ENCODE measurements at regions of chr11 and their contacts with region 1.

Region 1: DNA sequence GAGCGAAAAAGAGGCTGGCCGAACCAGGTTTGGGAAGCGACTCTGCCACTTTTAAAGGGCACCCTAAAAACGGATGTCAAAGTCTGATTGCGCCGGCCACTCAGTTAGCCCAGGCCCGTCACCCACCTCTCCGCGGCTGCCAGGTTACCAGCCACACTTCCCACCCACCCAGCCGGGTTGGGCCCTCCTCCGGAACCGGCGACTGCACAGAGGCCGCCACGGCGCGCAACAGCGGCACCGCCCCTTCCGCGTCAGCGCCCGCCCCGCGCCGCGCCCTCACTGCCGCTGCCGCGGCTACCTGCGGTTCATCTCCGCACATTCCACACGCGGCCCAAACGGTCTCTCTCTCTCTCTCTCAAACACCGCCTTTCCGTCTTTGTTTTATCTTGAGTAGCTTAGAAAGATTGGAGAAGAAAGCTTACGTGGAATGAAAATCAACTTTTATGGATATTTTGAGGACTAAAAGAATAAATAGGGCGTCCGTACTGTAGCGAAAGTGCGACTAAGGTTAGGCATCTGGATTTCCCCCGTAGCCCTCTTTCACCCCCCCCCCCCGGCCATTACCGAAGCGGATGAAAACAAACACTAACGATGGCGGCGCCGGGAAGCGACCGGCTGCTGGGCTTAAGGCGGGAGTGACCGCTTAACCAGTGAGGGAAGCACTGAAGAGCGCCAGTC is at the starts of genes ATG13 and HARBI1:
- DNase-seq: peak; percentile 81 to 96 (median 92)
- ATAC-seq: peak; percentile 91
- H3K4me3 ChIP-seq: peak within 1 kb of the TSS; percentile 84 to 95
- H3K4me3 Mint-ChIP-seq: peak within 1 kb of the TSS; percentile 95
- H3K27ac ChIP-seq: peak within 1 kb of the TSS; percentile 96 to 98
- H3K27ac Mint-ChIP-seq: peak within 1 kb of the TSS; percentile 98
- H3K4me1 ChIP-seq: peaks cover 19% of the 10 kb centered on the region
- H3K4me1 Mint-ChIP-seq: peaks cover 42% of the 10 kb centered on the region
- H3K27me3 ChIP-seq: no peaks in the 10 kb centered on the region
- H3K27me3 Mint-ChIP-seq: no peaks in the 10 kb centered on the region
- CTCF ChIP-seq: no peak
- total RNA-seq, gene ATG13: 117 to 137 TPM
- total RNA-seq, gene HARBI1: 18.1 to 19.1 TPM

Region 2: GRCh38 chr11:46121724-46122477 is 495.2 kb before region 1 on chr11:
- CTCF ChIA-PET with region 1: no interaction called
- POLR2A ChIA-PET with region 1: no interaction called
- intact Hi-C with region 1: loop called (anchors 5 to 10 kb)
- DNase-seq: peak; percentile 50 to 92 (median 73)
- ATAC-seq: peak; percentile 54
- H3K4me3 ChIP-seq: peak overlapping the region; percentile 58 to 63
- H3K4me3 Mint-ChIP-seq: peak overlapping the region; percentile 88
- H3K27ac ChIP-seq: peak overlapping the region; percentile 1 to 26
- H3K27ac Mint-ChIP-seq: peak overlapping the region; percentile 96
- H3K4me1 ChIP-seq: peaks cover 30% of the 10 kb centered on the region
- H3K4me1 Mint-ChIP-seq: peaks cover 33% of the 10 kb centered on the region
- H3K27me3 ChIP-seq: no peaks in the 10 kb centered on the region
- H3K27me3 Mint-ChIP-seq: no peaks in the 10 kb centered on the region
- CTCF ChIP-seq: no peak

Region 3: GRCh38 chr11:46438211-46438610 is 178.9 kb before region 1 on chr11:
- CTCF ChIA-PET with region 1: no interaction called
- POLR2A ChIA-PET with region 1: no interaction called
- intact Hi-C with region 1: no loop called
- DNase-seq: no peak
- ATAC-seq: no peak
- H3K4me3 ChIP-seq: no peak overlapping the region
- H3K4me3 Mint-ChIP-seq: no peak overlapping the region
- H3K27ac ChIP-seq: no peak overlapping the region
- H3K27ac Mint-ChIP-seq: no peak overlapping the region
- H3K4me1 ChIP-seq: no peaks in the 10 kb centered on the region
- H3K4me1 Mint-ChIP-seq: no peaks in the 10 kb centered on the region
- H3K27me3 ChIP-seq: no peaks in the 10 kb centered on the region
- H3K27me3 Mint-ChIP-seq: no peaks in the 10 kb centered on the region
- CTCF ChIP-seq: no peak

Region 4: GRCh38 chr11:46489661-46490560 is 127.2 kb before region 1 on chr11:
- CTCF ChIA-PET with region 1: interaction called, 10 read pairs
- POLR2A ChIA-PET with region 1: interaction called, 4 read pairs
- intact Hi-C with region 1: loop called (anchors 1 kb)
- DNase-seq: peak in 7 of 9 experiments; percentile 5 to 61 (median 32)
- ATAC-seq: peak; percentile 59
- H3K4me3 ChIP-seq: no peak overlapping the region
- H3K4me3 Mint-ChIP-seq: no peak overlapping the region
- H3K27ac ChIP-seq: no peak overlapping the region
- H3K27ac Mint-ChIP-seq: no peak overlapping the region
- H3K4me1 ChIP-seq: no peaks in the 10 kb centered on the region
- H3K4me1 Mint-ChIP-seq: peaks cover 11% of the 10 kb centered on the region
- H3K27me3 ChIP-seq: no peaks in the 10 kb centered on the region
- H3K27me3 Mint-ChIP-seq: no peaks in the 10 kb centered on the region
- CTCF ChIP-seq: peak; percentile 61

Region 5: GRCh38 chr11:46593550-46594373 is 23.4 kb before region 1 on chr11 and contains the start of gene AMBRA1:
- CTCF ChIA-PET with region 1: interaction called, 4 read pairs
- POLR2A ChIA-PET with region 1: interaction called, 7 read pairs
- intact Hi-C with region 1: loop called (anchors 1 kb)
- DNase-seq: peak; percentile 70 to 91 (median 81)
- ATAC-seq: peak; percentile 90
- H3K4me3 ChIP-seq: peak within 1 kb of the TSS; percentile 67 to 80
- H3K4me3 Mint-ChIP-seq: peak within 1 kb of the TSS; percentile 98
- H3K27ac ChIP-seq: peak within 1 kb of the TSS; percentile 57 to 67
- H3K27ac Mint-ChIP-seq: peak within 1 kb of the TSS; percentile 96
- H3K4me1 ChIP-seq: peaks cover 32% of the 10 kb centered on the region
- H3K4me1 Mint-ChIP-seq: peaks cover 43% of the 10 kb centered on the region
- H3K27me3 ChIP-seq: no peaks in the 10 kb centered on the region
- H3K27me3 Mint-ChIP-seq: no peaks in the 10 kb centered on the region
- CTCF ChIP-seq: no peak
- total RNA-seq, gene AMBRA1: 31.2 to 34.1 TPM

Region 6: GRCh38 chr11:46826310-46827044 is 209.3 kb after region 1 on chr11:
- CTCF ChIA-PET with region 1: no interaction called
- POLR2A ChIA-PET with region 1: no interaction called
- intact Hi-C with region 1: loop called in 1 of 2 experiments (anchors 5 kb)
- DNase-seq: peak; percentile 41 to 82 (median 75)
- ATAC-seq: peak; percentile 100
- H3K4me3 ChIP-seq: peak overlapping the region; percentile 57 to 60
- H3K4me3 Mint-ChIP-seq: peak overlapping the region; percentile 84
- H3K27ac ChIP-seq: no peak overlapping the region
- H3K27ac Mint-ChIP-seq: peak overlapping the region; percentile 32
- H3K4me1 ChIP-seq: peaks cover 16% of the 10 kb centered on the region
- H3K4me1 Mint-ChIP-seq: peaks cover 34% of the 10 kb centered on the region
- H3K27me3 ChIP-seq: no peaks in the 10 kb centered on the region
- H3K27me3 Mint-ChIP-seq: no peaks in the 10 kb centered on the region
- CTCF ChIP-seq: no peak

Region 7: GRCh38 chr11:46936138-46937110 is 319.3 kb after region 1 on chr11 and contains the start of gene CSTPP1:
- CTCF ChIA-PET with region 1: no interaction called
- POLR2A ChIA-PET with region 1: no interaction called
- intact Hi-C with region 1: loop called in 1 of 2 experiments (anchors 1 kb)
- DNase-seq: peak; percentile 80 to 97 (median 93)
- ATAC-seq: peak; percentile 96
- H3K4me3 ChIP-seq: peak within 1 kb of the TSS; percentile 73 to 82
- H3K4me3 Mint-ChIP-seq: peak within 1 kb of the TSS; percentile 97
- H3K27ac ChIP-seq: peak within 1 kb of the TSS; percentile 58 to 71
- H3K27ac Mint-ChIP-seq: peak within 1 kb of the TSS; percentile 95
- H3K4me1 ChIP-seq: peaks cover 9% of the 10 kb centered on the region
- H3K4me1 Mint-ChIP-seq: peaks cover 20% of the 10 kb centered on the region
- H3K27me3 ChIP-seq: no peaks in the 10 kb centered on the region
- H3K27me3 Mint-ChIP-seq: peaks cover 6% of the 10 kb centered on the region
- CTCF ChIP-seq: no peak
- total RNA-seq, gene CSTPP1: 4.1 to 4.6 TPM

Region 8: GRCh38 chr11:47426061-47426956 is 809.2 kb after region 1 on chr11 and contains the start of gene PSMC3:
- CTCF ChIA-PET with region 1: no interaction called
- POLR2A ChIA-PET with region 1: no interaction called
- intact Hi-C with region 1: loop called in 1 of 2 experiments (anchors 1 kb)
- DNase-seq: peak; percentile 96 to 99 (median 98)
- ATAC-seq: peak; percentile 98
- H3K4me3 ChIP-seq: peak within 1 kb of the TSS; percentile 68 to 98
- H3K4me3 Mint-ChIP-seq: peak within 1 kb of the TSS; percentile 100
- H3K27ac ChIP-seq: peak within 1 kb of the TSS; percentile 77 to 81
- H3K27ac Mint-ChIP-seq: peak within 1 kb of the TSS; percentile 98
- H3K4me1 ChIP-seq: peaks cover 14% of the 10 kb centered on the region
- H3K4me1 Mint-ChIP-seq: peaks cover 28% of the 10 kb centered on the region
- H3K27me3 ChIP-seq: no peaks in the 10 kb centered on the region
- H3K27me3 Mint-ChIP-seq: no peaks in the 10 kb centered on the region
- CTCF ChIP-seq: no peak
- total RNA-seq, gene PSMC3: 58.1 to 63.4 TPM

Measured in CD8-positive, alpha-beta T cell (primary cell).